Activated T-helper 1 cell treated with anti-CD3 and anti-CD28 coated beads, Interleukin-12 subunit alpha, Interleukin-12 subunit beta, Interleukin-2, Interleukin-4 antibody, amounts not matched to agents 30 ng/mL and 10 ng/mL and 1 ng/mL, durations not matched to agents 14 hours and 24 hours and 36 hours (primary cell): ENCODE measurements at regions of chr9 and their contacts with region 1.

Region 1: DNA sequence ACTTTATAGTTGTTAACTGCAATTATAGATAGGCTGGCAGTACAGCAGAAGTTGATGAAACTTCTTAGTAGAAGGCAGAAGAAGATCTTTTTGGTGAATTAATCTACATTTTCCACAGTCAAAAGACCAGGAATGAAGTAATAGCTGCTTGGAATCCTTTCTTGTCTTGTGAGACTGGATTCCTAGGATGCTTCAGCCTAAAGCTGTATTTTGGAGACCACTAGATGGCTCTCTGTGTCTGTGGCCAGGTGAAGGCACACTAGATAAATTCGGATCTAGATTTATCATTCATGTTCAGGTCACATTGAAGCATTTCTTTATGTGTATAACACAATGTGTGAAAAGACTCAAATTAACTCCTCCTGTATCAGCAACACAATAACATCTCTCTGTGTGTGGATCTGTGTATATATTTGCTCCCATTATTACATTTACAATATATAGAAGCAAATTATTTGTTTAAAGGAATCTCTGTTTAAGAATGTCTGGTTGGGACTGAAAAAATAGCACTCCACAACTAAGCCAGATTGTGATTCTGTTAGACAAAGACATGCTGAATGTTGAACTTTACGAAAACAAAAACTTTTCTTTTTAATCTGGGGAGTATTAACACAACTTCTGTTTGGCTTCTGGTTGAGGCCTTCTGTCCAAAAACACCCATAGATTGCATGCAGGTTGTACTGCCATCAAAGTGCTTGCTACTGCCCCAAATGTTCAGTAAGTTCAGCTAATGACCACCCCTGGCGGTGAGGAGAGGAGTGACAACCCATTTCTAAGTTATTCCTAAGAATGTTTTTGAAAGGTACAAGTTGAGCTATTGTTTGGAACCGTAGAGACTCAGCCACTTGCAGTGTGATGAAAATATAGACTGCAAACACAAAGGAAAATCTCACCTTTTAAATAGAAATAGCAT is 10.6 kb downstream of the GRIN3A start:
- DNase-seq: no peak
- H3K4me3 Mint-ChIP-seq: no peak overlapping the region
- H3K27ac Mint-ChIP-seq: no peak overlapping the region
- H3K4me1 Mint-ChIP-seq: no peaks in the 10 kb centered on the region
- H3K27me3 Mint-ChIP-seq: peaks cover 11% of the 10 kb centered on the region

Region 2: DNA sequence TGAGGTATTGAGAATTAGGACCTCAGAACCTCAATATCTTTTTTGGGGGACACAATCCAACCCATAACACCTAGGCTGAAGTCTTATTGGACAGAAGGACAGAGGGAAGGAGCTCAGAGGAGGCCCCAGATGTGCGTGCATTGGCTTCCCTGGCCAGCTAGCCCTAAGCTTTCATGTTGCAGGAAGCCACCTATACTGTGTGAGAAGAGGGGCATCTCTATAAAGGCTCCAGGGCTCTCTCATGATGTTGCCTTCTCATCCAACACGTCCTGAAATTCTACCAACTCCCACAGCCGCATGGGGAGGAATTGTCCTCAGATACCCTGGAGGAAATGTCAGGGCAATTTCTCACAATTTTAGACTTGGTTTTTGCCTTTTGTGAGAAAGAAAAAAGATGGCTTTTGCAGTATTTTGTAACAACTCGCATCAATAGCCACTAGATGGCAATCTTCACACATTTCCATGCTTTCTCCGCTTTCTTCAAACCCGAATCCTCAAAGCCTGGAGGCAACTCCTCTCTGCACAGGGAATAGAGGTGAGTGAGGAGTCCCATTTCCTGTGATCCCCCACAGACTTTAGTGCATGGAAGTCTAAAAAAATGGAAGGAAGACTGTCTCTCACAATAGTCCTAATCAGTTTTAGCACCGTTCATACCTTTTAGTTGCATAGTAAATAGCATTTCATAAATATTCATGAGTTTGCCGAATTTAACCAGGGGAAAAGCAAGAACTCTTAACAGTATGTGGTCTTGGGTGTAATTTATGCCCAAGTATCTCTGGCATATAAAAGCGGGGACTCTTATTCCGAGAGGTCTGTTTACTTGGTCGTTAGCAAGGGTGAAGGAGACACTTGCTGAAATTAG is 125.7 kb before region 1 on chr9:
- intact Hi-C with region 1: loop called (anchors 1 kb)
- DNase-seq: no peak
- H3K4me3 Mint-ChIP-seq: no peak overlapping the region
- H3K27ac Mint-ChIP-seq: no peak overlapping the region
- H3K4me1 Mint-ChIP-seq: peaks cover 4% of the 10 kb centered on the region
- H3K27me3 Mint-ChIP-seq: peaks cover 12% of the 10 kb centered on the region